Right ventricle myocardium inferior (tissue), 1 donor: ENCODE measurements at regions of chr19 and their contacts with region 1.

Region 1: GRCh38 chr19:46081928-46082727 is 41.3 kb upstream of the IGFL4 start:
- DNase-seq: no peak
- ATAC-seq: no peak

Region 2: GRCh38 chr19:45862564-45863334 is 219.4 kb before region 1 on chr19 and contains the start of gene SYMPK:
- intact Hi-C with region 1: no loop called
- DNase-seq: peak; percentile 99
- ATAC-seq: peak; percentile 100
- total RNA-seq, gene SYMPK: 29.9 TPM

Region 3: DNA sequence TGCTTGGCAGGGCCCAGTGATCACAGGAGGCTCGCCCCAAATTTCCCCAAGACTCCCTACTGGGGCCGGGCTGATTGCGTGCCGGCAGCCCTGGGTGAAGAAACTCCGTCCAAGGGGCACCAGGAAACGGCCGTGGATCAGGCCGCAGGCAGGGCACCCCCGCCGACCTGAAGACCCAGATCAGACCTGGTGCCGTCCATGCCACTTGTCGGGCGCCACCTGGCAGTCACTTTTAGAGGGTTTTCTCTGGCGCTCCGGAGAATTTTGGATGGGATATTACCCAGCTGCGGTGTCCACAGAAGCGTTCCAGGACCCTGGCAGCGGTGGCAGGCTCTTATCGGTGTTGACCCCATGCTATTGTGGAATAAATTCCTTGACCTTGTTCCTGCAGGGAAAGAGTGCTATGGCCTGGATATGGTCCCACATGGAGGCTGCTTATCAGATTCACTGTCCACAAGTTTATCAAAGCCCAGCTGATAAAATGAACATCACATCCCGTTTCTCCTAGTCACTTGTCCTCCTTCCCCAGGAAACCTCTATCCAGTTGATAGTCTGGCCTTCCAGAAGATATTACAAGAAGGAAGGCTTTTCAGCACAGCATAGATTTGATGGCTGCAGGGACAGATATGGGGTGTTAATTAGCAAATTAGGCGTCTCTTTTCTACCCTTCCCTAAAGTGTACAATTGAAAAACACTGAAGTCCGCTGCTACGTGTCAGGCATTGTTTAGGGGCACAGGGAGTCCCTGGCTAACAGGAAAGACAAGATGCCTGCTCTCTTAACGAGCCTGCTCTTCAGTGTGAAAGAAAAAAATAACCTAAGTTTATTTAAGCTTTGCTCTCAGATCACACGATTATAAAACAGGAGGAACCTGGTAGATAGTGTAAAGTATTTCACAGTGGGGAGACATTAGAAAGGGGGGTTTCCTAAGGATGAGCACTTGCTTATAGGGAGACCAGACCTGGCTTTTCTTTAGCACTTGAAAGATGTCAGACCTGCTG is 104.3 kb after region 1 on chr19:
- intact Hi-C with region 1: loop called (anchors 2 kb)
- DNase-seq: no peak
- ATAC-seq: no peak

Region 4: GRCh38 chr19:46265217-46265828 is 183.2 kb after region 1 on chr19:
- intact Hi-C with region 1: loop called (anchors 1 kb)
- DNase-seq: no peak
- ATAC-seq: peak; percentile 80